ENCODE measurements at regions of chr5 and their contacts with region 1.

Region 1: DNA sequence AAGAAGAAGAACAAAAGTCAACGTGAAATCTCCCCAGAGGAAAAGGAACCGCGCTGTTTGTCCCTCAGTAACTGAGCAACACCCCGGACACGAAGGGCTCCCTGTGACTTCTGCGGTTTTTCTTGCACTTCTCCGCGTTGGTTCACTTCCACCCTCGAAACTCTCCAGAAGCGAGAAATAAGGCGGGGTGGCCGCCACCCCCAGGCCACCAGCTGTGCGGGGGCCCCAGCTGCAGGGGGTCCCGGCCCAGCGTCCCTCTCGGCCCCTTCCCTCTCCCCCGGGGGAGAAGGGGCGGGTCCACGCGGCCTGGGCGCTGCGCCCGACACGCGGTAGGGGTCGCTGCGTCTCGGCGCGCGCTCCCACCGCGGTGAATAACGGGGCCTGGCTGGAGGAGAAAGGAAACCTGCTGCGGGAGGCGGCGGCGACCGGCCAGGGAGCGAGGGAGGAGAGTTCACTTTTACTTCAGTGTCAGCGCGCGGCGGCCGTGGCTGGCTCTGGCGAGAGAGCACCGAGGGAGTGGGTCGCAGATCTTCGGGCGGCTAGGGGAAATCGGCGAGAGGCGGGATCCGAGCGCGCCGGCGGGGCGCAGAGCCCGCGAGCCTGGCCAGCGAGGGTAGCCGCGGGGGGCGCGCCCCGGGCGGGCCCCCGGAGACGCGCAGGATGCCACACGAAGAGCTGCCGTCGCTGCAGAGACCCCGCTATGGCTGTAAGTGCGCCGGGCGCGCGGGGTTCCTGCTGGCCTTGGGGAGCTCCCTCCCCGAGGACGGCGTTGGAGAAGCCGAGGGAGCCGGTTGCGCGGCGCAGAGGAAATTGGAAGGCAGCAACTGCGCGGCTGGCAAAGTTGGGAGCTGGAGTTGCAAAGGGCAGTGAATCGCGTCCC is at the start of gene IQGAP2:
- DNase-seq: peak; percentile 91
- H3K4me3 ChIP-seq: peak within 1 kb of the TSS; percentile 93
- H3K27ac ChIP-seq: peak within 1 kb of the TSS; percentile 94
- H3K4me1 ChIP-seq: peaks cover 54% of the 10 kb centered on the region
- CTCF ChIP-seq: peak; percentile 82
- total RNA-seq, gene IQGAP2: 30.0 and 49.9 TPM in 2 replicates

Region 2: DNA sequence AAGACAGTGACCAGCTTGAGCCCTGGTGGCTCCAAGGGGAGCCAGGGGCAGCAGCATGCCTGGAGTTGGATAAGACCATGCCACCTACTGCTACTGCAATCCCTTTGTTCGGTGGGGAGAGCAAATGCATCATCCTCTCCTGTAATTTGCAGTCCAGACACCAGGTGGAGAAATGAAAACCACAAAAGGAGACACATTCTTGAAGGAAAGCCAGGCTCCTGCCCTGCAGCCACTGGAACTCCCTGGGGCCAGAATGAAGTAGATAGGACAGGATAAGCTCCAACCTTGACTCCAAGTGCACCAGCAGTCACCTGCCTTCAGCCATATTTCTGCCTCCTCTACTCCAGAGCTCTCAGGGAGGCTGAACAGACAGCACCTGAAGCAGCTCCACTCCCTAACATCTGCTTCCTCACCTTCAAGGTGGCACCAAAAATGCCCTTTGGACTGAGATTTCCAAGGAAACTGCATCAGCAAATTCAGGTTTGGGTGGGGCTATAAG is 65.1 kb before region 1 on chr5:
- CTCF ChIA-PET with region 1: interaction called, 5 read pairs
- POLR2A ChIA-PET with region 1: interaction called, 5 read pairs
- intact Hi-C with region 1: loop called (anchors 2 kb)
- DNase-seq: peak; percentile 74
- H3K4me3 ChIP-seq: no peak overlapping the region
- H3K27ac ChIP-seq: no peak overlapping the region
- H3K4me1 ChIP-seq: peaks cover 26% of the 10 kb centered on the region
- CTCF ChIP-seq: peak; percentile 81

Region 3: DNA sequence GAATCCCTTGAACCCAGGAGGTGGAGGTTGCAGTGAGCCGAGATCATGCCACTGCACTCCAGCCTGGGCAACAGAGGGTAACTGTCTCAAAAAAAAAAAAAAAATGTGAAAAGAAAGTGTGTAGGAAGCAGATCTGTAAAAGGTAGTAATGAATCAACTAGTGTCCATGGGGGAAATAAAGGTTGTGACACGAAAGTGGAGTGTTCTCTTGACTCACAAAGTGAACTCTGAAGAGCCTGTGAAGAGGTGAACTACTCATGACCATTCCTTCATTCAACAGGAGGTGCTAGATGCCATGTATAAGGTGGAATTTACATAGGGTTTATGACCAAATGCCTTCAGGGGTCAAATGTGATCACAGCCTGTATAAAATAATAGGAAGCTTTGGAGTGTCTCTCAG is 12.7 kb after region 1 on chr5:
- CTCF ChIA-PET with region 1: interaction called, 3 read pairs
- POLR2A ChIA-PET with region 1: interaction called, 16 read pairs
- intact Hi-C with region 1: no loop called
- DNase-seq: no peak
- H3K4me3 ChIP-seq: no peak overlapping the region
- H3K27ac ChIP-seq: no peak overlapping the region
- H3K4me1 ChIP-seq: peaks cover 5% of the 10 kb centered on the region
- CTCF ChIP-seq: no peak

Region 4: GRCh38 chr5:76582230-76583162 is 179.4 kb after region 1 on chr5:
- CTCF ChIA-PET with region 1: interaction called, 6 read pairs
- POLR2A ChIA-PET with region 1: interaction called, 7 read pairs
- intact Hi-C with region 1: loop called (anchors 1 kb)
- DNase-seq: peak; percentile 52
- H3K4me3 ChIP-seq: no peak overlapping the region
- H3K27ac ChIP-seq: peak overlapping the region; percentile 6
- H3K4me1 ChIP-seq: peaks cover 16% of the 10 kb centered on the region
- CTCF ChIP-seq: no peak

Measured in OCI-LY7 (cell line).